ENCODE measurements at regions of chr3 and their contacts with region 1.

Region 1: GRCh38 chr3:195714341-195715011 is 6.3 kb upstream of the MUC20 start:
- DNase-seq: no peak
- ATAC-seq: no peak
- H3K4me3 ChIP-seq: no peak overlapping the region
- H3K27ac ChIP-seq: no peak overlapping the region
- H3K4me1 ChIP-seq: peaks cover 15% of the 10 kb centered on the region
- H3K27me3 ChIP-seq: no peaks in the 10 kb centered on the region
- CTCF ChIP-seq: no peak

Region 2: GRCh38 chr3:195583831-195584542 is 130.5 kb before region 1 on chr3 and contains the start of gene APOD:
- CTCF ChIA-PET with region 1: no interaction called
- POLR2A ChIA-PET with region 1: interaction called, 25 read pairs
- intact Hi-C with region 1: no loop called
- DNase-seq: peak; percentile 50
- ATAC-seq: peak; percentile 95
- H3K4me3 ChIP-seq: no peak within 1 kb of the TSS
- H3K27ac ChIP-seq: no peak within 1 kb of the TSS
- H3K4me1 ChIP-seq: peaks cover 11% of the 10 kb centered on the region; the same call in 1 of the 2 replicates
- H3K27me3 ChIP-seq: no peaks in the 10 kb centered on the region; the same call in 1 of the 2 replicates
- CTCF ChIP-seq: no peak
- total RNA-seq, gene APOD: 0.29 TPM in 1 of 2 replicates, not detected in the other

Region 3: DNA sequence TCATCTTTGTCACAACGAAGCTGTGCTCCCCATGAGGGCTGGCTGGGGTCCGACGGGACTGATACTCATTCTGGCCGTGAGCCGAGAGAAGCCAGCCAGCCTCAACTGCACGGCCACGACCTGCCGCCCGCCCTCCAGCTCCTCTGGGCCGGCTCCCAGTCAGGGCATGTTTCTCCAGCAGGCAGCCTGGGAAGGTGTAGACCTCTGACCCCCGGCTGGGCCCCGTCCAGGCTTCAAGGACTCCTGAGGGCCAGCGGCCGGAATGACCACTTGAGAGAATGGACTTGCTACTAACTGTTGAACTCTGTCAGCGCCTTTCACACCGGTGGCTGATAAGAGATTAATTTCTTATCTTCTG is 115.4 kb after region 1 on chr3:
- CTCF ChIA-PET with region 1: no interaction called
- POLR2A ChIA-PET with region 1: no interaction called
- intact Hi-C with region 1: no loop called
- DNase-seq: no peak
- ATAC-seq: no peak
- H3K4me3 ChIP-seq: no peak overlapping the region
- H3K27ac ChIP-seq: no peak overlapping the region
- H3K4me1 ChIP-seq: no peaks in the 10 kb centered on the region
- H3K27me3 ChIP-seq: no peaks in the 10 kb centered on the region
- CTCF ChIP-seq: no peak

Region 4: GRCh38 chr3:195863121-195864006 is 148.9 kb after region 1 on chr3:
- CTCF ChIA-PET with region 1: no interaction called
- POLR2A ChIA-PET with region 1: no interaction called
- intact Hi-C with region 1: no loop called
- DNase-seq: peak; percentile 88
- ATAC-seq: peak; percentile 94
- H3K4me3 ChIP-seq: no peak overlapping the region
- H3K27ac ChIP-seq: peak overlapping the region; percentile 29
- H3K4me1 ChIP-seq: peaks cover 14% of the 10 kb centered on the region
- H3K27me3 ChIP-seq: no peaks in the 10 kb centered on the region
- CTCF ChIP-seq: peak; percentile 95